Panc1 (cell line): ENCODE measurements at regions of chr11 and their contacts with region 1.

Region 1: DNA sequence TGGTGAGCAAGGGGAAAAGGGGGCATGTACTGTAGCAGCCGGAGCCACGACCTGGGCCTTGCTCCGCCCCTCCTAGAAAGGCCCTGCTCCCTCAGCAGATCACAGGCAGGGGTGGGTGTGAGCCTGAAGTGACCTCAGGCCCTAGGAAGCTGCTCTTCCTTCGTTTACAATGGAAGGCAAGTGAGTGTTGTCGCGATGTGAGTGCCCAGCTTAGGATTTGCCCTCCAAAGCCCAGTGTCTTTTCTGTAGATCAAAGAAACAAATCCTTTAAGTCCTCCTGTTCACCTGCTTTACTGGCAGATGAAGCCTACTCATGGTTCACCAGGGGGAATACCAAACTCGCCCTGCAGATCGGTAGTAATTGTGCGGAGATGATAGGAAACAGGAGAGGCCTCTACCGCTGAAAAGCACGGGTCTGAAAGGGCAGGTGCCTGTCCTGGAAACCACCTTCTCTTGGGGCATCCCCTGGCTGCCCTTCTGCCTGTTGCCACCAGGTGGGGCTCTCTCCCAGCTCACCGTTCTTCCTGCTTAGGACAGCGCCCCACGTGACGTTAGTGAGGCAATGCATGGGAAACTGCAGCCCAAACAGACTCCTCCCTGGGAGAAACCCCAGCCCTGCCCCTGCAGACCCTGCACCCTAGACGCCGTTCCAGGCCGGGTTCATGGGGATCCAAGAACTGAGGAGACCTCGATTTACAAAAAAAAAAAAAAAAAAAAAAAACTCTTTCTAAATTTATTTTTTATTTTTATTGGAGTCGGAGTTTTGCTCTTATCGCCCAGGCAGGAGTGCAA is 45.9 kb upstream of the RAB1B start:
- DNase-seq: peak; percentile 86
- ATAC-seq: peak; percentile 93
- H3K4me3 ChIP-seq: no peak overlapping the region
- H3K27ac ChIP-seq: no peak overlapping the region
- H3K4me1 ChIP-seq: peaks cover 4% of the 10 kb centered on the region; the same call in 1 of the 2 replicates
- H3K27me3 ChIP-seq: no peaks in the 10 kb centered on the region
- CTCF ChIP-seq: peak; percentile 100

Region 2: DNA sequence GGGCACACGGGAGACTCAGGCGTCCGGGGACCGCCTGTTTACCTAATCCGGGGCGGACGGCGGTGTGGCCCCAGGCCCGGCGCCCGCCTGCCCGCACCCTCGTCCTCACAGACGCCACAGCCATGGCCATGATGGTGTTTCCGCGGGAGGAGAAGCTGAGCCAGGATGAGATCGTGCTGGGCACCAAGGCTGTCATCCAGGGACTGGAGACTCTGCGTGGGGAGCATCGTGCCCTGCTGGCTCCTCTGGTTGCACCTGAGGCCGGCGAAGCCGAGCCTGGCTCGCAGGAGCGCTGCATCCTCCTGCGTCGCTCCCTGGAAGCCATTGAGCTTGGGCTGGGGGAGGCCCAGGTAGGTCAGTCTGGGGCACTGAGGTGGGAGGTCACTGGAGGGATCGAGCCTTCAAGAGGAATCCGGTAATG is 35.9 kb after region 1 on chr11:
- CTCF ChIA-PET with region 1: interaction called, 12 read pairs
- POLR2A ChIA-PET with region 1: no interaction called
- in situ Hi-C with region 1: no loop called
- intact Hi-C with region 1: loop called (anchors 1 kb)
- DNase-seq: no peak
- ATAC-seq: peak; percentile 3
- H3K4me3 ChIP-seq: peak overlapping the region; percentile 83
- H3K27ac ChIP-seq: peak overlapping the region; percentile 86
- H3K4me1 ChIP-seq: peaks cover 7% of the 10 kb centered on the region
- H3K27me3 ChIP-seq: no peaks in the 10 kb centered on the region
- CTCF ChIP-seq: no peak; the same call in 1 of the 2 replicates

Region 3: DNA sequence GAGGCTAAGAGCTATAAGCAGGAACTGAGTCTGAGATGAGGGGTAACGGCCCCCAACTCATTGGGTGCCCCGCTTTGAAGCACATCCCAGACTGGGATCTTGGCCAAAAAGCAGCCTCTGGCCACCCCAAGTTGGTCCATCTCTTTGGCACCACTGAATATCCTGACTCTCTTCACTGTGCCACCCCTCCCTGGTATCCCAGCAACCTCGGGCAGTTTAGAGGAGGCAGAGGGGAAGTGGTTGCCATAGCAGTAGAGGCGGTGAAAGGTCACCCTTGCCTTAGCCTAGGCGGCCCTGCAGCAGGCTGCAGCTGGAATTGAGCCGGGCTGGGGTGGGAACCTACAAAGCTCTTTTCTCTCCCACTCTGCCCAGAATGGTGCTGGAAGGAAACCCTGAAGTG is 245.2 kb after region 1 on chr11:
- CTCF ChIA-PET with region 1: no interaction called
- POLR2A ChIA-PET with region 1: no interaction called
- in situ Hi-C with region 1: no loop called
- intact Hi-C with region 1: no loop called
- DNase-seq: no peak
- ATAC-seq: peak; percentile 17; the same call in 1 of the 2 replicates
- H3K4me3 ChIP-seq: peak overlapping the region; percentile 50 to 70
- H3K27ac ChIP-seq: no peak overlapping the region
- H3K4me1 ChIP-seq: peaks cover 11% of the 10 kb centered on the region
- H3K27me3 ChIP-seq: no peaks in the 10 kb centered on the region
- CTCF ChIP-seq: no peak

Region 4: DNA sequence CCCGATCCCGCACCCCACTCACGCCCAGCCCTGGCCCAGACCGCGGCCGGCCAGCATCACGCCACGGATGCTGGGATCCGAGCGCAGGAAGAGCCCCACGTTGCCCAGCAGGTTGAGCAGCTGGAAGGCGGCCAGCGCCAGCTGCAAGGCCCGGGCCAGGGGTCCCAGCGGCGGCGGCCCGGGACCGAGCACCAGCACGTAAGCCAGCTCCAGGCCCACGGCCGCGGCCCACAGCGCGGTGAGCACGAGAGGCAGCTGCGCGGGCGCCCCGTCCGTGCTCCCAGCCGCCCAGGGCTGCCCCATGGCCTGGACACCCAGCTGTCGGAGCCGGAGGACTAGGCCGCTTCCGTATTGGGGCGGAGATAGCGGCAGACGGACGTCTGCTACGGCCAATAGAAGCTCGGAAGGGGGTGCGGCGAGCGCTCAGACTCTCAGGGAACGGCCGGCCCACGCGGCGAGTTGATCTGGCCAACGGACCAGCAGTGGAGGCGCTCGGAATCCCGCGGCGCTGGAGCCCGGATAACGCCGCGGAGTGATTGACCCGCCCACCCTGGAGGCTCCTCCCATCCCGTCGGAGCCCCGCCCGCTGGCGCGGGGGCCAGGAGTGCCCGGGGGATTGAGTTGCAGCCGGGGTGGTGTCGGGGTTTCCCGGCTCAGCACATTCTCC is 323.3 kb after region 1 on chr11 and contains the start of gene ZDHHC24:
- CTCF ChIA-PET with region 1: no interaction called
- POLR2A ChIA-PET with region 1: no interaction called
- in situ Hi-C with region 1: no loop called
- intact Hi-C with region 1: no loop called
- DNase-seq: peak; percentile 85
- ATAC-seq: peak; percentile 98
- H3K4me3 ChIP-seq: peak within 1 kb of the TSS; percentile 87 to 92
- H3K27ac ChIP-seq: peak within 1 kb of the TSS; percentile 83
- H3K4me1 ChIP-seq: peaks cover 9% of the 10 kb centered on the region
- H3K27me3 ChIP-seq: no peaks in the 10 kb centered on the region
- CTCF ChIP-seq: no peak
- total RNA-seq, gene ZDHHC24: 29.5 TPM